ENCODE measurements at regions of chr3 and their contacts with region 1.

Region 1: GRCh38 chr3:67113802-67114407 is 115.8 kb downstream of the KBTBD8 start:
- DNase-seq: peak; percentile 89
- ATAC-seq: peak; percentile 99
- H3K4me3 Mint-ChIP-seq: no peak overlapping the region
- H3K27ac Mint-ChIP-seq: no peak overlapping the region
- H3K4me1 Mint-ChIP-seq: peaks cover 5% of the 10 kb centered on the region
- H3K27me3 Mint-ChIP-seq: peaks cover 15% of the 10 kb centered on the region

Region 2: GRCh38 chr3:66797889-66798560 is 315.9 kb before region 1 on chr3:
- CTCF ChIA-PET with region 1: no interaction called
- POLR2A ChIA-PET with region 1: no interaction called
- intact Hi-C with region 1: no loop called
- DNase-seq: no peak
- ATAC-seq: no peak
- H3K4me3 Mint-ChIP-seq: no peak overlapping the region
- H3K27ac Mint-ChIP-seq: no peak overlapping the region
- H3K4me1 Mint-ChIP-seq: no peaks in the 10 kb centered on the region
- H3K27me3 Mint-ChIP-seq: peaks cover 18% of the 10 kb centered on the region

Region 3: GRCh38 chr3:66938338-66938963 is 175.5 kb before region 1 on chr3:
- CTCF ChIA-PET with region 1: interaction called, 10 read pairs
- POLR2A ChIA-PET with region 1: no interaction called
- intact Hi-C with region 1: no loop called
- DNase-seq: peak; percentile 40
- ATAC-seq: peak; percentile 44
- H3K4me3 Mint-ChIP-seq: no peak overlapping the region
- H3K27ac Mint-ChIP-seq: no peak overlapping the region
- H3K4me1 Mint-ChIP-seq: no peaks in the 10 kb centered on the region
- H3K27me3 Mint-ChIP-seq: peaks cover 18% of the 10 kb centered on the region

Region 4: GRCh38 chr3:67357610-67358458 is 243.9 kb after region 1 on chr3:
- CTCF ChIA-PET with region 1: interaction called, 3 read pairs
- POLR2A ChIA-PET with region 1: no interaction called
- intact Hi-C with region 1: loop called (anchors 5 kb)
- DNase-seq: no peak
- ATAC-seq: no peak
- H3K4me3 Mint-ChIP-seq: no peak overlapping the region
- H3K27ac Mint-ChIP-seq: no peak overlapping the region
- H3K4me1 Mint-ChIP-seq: peaks cover 27% of the 10 kb centered on the region
- H3K27me3 Mint-ChIP-seq: no peaks in the 10 kb centered on the region

Region 5: GRCh38 chr3:68256635-68257223 is 1142.8 kb after region 1 on chr3:
- CTCF ChIA-PET with region 1: no interaction called
- POLR2A ChIA-PET with region 1: no interaction called
- intact Hi-C with region 1: loop called in 1 of 2 experiments (anchors 5 kb)
- DNase-seq: peak; percentile 47
- ATAC-seq: no peak
- H3K4me3 Mint-ChIP-seq: no peak overlapping the region
- H3K27ac Mint-ChIP-seq: no peak overlapping the region
- H3K4me1 Mint-ChIP-seq: no peaks in the 10 kb centered on the region
- H3K27me3 Mint-ChIP-seq: peaks cover 3% of the 10 kb centered on the region

Region 6: GRCh38 chr3:68893600-68894239 is 1779.8 kb after region 1 on chr3:
- CTCF ChIA-PET with region 1: interaction called, 6 read pairs
- POLR2A ChIA-PET with region 1: no interaction called
- intact Hi-C with region 1: loop called (anchors 5 kb)
- DNase-seq: no peak
- ATAC-seq: no peak
- H3K4me3 Mint-ChIP-seq: no peak overlapping the region
- H3K27ac Mint-ChIP-seq: no peak overlapping the region
- H3K4me1 Mint-ChIP-seq: no peaks in the 10 kb centered on the region
- H3K27me3 Mint-ChIP-seq: peaks cover under 1% of the 10 kb centered on the region